Colonic mucosa (tissue), 4 donors: ENCODE measurements at regions of chr4 and their contacts with region 1.

Region 1: DNA sequence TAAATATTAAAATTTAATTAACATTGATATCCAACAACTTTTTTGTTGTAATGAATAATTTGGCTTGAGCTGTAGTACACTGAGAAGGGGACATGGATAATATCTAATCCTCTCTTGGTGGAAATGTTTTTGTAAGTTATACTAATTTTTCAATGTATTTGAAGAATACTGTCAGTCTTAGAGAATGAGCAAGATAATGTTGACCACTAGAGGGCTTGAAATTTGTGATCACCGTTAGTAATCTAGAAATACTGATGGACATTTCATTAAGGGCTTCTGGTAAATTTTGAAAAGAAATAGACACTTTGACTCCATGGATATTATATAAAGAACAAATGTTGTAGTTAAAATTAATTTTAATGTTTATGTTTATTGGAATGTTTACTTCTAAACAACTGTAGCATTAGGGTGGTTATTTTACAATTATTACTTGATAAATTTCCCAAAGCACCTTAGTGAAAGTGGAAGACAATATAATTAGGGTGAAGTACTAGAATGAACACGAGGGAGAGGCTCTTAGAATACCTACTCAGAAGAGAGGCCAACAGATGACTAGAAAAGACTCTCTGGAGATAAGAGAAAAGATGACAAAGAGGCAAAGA is 20.0 kb upstream of the CAMK2D start:
- DNase-seq: no peak
- H3K4me3 ChIP-seq: no peak overlapping the region
- H3K27ac ChIP-seq: no peak overlapping the region
- H3K4me1 ChIP-seq: no peaks in the 10 kb centered on the region
- H3K27me3 ChIP-seq: no peaks in the 10 kb centered on the region
- CTCF ChIP-seq: peak; percentile 55

Region 2: GRCh38 chr4:113692809-113693411 is 88.6 kb before region 1 on chr4:
- intact Hi-C with region 1: no loop called
- DNase-seq: no peak
- H3K4me3 ChIP-seq: no peak overlapping the region
- H3K27ac ChIP-seq: peak overlapping the region; percentile 71
- H3K4me1 ChIP-seq: peaks cover 12% of the 10 kb centered on the region
- H3K27me3 ChIP-seq: no peaks in the 10 kb centered on the region
- CTCF ChIP-seq: no peak

Region 3: GRCh38 chr4:113899271-113900070 is 117.9 kb after region 1 on chr4:
- intact Hi-C with region 1: loop called (anchors 10 kb)
- DNase-seq: no peak
- H3K4me3 ChIP-seq: no peak overlapping the region
- H3K27ac ChIP-seq: no peak overlapping the region
- H3K4me1 ChIP-seq: no peaks in the 10 kb centered on the region
- H3K27me3 ChIP-seq: no peaks in the 10 kb centered on the region
- CTCF ChIP-seq: no peak